Activated CD4-positive, alpha-beta memory T cell treated with anti-CD3 and anti-CD28 coated beads, Interleukin-2, amount 10 ng/mL, durations not matched to agents 7 days and 5 days (primary cell): ENCODE measurements at regions of chr1 and their contacts with region 1.

Region 1: GRCh38 chr1:28341591-28341990 is 12.8 kb downstream of the MED18 start:
- DNase-seq: no peak
- H3K4me3 Mint-ChIP-seq: no peak overlapping the region
- H3K27ac Mint-ChIP-seq: no peak overlapping the region
- H3K4me1 Mint-ChIP-seq: peaks cover 8% of the 10 kb centered on the region
- H3K27me3 Mint-ChIP-seq: no peaks in the 10 kb centered on the region

Region 2: GRCh38 chr1:28359592-28360239 is 18.1 kb after region 1 on chr1:
- CTCF ChIA-PET with region 1: interaction called, 10 read pairs
- POLR2A ChIA-PET with region 1: no interaction called
- DNase-seq: peak; percentile 79
- H3K4me3 Mint-ChIP-seq: no peak overlapping the region
- H3K27ac Mint-ChIP-seq: no peak overlapping the region
- H3K4me1 Mint-ChIP-seq: peaks cover 7% of the 10 kb centered on the region
- H3K27me3 Mint-ChIP-seq: peaks cover 6% of the 10 kb centered on the region